Activated CD8-positive, alpha-beta T cell treated with anti-CD3 and anti-CD28 coated beads for 36 hours (primary cell): ENCODE measurements at regions of chr17 and their contacts with region 1.

Region 1: DNA sequence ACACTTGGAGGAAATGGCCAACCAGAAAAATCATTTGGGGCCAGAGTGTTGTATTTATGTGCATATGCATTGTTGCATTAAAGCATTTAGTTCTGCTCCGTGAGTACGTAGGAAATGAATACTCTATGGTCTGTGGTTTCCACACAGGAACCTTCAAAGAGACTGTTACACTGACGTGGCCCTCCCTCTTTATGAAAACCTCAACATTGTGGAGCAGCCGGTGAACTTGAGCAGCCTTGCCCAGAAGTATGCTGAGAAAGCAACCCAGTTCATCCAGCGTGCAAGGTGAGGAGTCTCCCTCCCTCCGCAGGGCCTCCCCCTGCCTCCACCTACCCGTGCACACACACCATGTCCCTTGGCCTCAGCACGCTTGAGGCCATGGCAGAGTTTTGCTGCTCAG is 65.2 kb downstream of the ARSG start:
- DNase-seq: peak; percentile 81
- ATAC-seq: peak; percentile 92
- H3K4me3 Mint-ChIP-seq: peak overlapping the region; percentile 51
- H3K27ac Mint-ChIP-seq: peak overlapping the region; percentile 76
- H3K4me1 Mint-ChIP-seq: peaks cover 45% of the 10 kb centered on the region
- H3K27me3 Mint-ChIP-seq: no peaks in the 10 kb centered on the region
- CTCF ChIP-seq: no peak

Region 2: GRCh38 chr17:68346448-68346847 is 10.1 kb before region 1 on chr17:
- CTCF ChIA-PET with region 1: interaction called, 5 read pairs
- POLR2A ChIA-PET with region 1: interaction called, 13 read pairs
- intact Hi-C with region 1: no loop called
- DNase-seq: peak; percentile 90
- ATAC-seq: peak; percentile 86
- H3K4me3 Mint-ChIP-seq: peak overlapping the region; percentile 71
- H3K27ac Mint-ChIP-seq: peak overlapping the region; percentile 97
- H3K4me1 Mint-ChIP-seq: peaks cover 65% of the 10 kb centered on the region
- H3K27me3 Mint-ChIP-seq: no peaks in the 10 kb centered on the region
- CTCF ChIP-seq: no peak

Region 3: GRCh38 chr17:68591583-68591982 is 235.1 kb after region 1 on chr17:
- CTCF ChIA-PET with region 1: no interaction called
- POLR2A ChIA-PET with region 1: no interaction called
- intact Hi-C with region 1: no loop called
- DNase-seq: peak; percentile 9
- ATAC-seq: no peak
- H3K4me3 Mint-ChIP-seq: no peak overlapping the region
- H3K27ac Mint-ChIP-seq: no peak overlapping the region
- H3K4me1 Mint-ChIP-seq: peaks cover 14% of the 10 kb centered on the region
- H3K27me3 Mint-ChIP-seq: peaks cover 36% of the 10 kb centered on the region
- CTCF ChIP-seq: no peak